Caco-2 (cell line): ENCODE measurements at regions of chr18 and their contacts with region 1.

Region 1: GRCh38 chr18:21111341-21112139 is at the start of gene ROCK1:
- DNase-seq: peak; percentile 97 to 98
- H3K4me3 ChIP-seq: peak within 1 kb of the TSS; percentile 90
- H3K4me3 Mint-ChIP-seq: no peak within 1 kb of the TSS
- H3K27ac Mint-ChIP-seq: peak within 1 kb of the TSS; percentile 79
- H3K4me1 ChIP-seq: peaks cover 7% of the 10 kb centered on the region; the same call in 1 of the 2 replicates
- H3K4me1 Mint-ChIP-seq: no peaks in the 10 kb centered on the region
- H3K27me3 ChIP-seq: no peaks in the 10 kb centered on the region
- H3K27me3 Mint-ChIP-seq: no peaks in the 10 kb centered on the region
- CTCF ChIP-seq: no peak
- total RNA-seq, gene ROCK1: 50.3 and 51.3 TPM in 2 replicates

Region 2: GRCh38 chr18:20971886-20972267 is 139.7 kb before region 1 on chr18:
- CTCF ChIA-PET with region 1: interaction called, 3 read pairs
- POLR2A ChIA-PET with region 1: no interaction called
- intact Hi-C with region 1: loop called (anchors 10 kb)
- DNase-seq: peak in 1 of 2 experiments; percentile 55
- H3K4me3 ChIP-seq: no peak overlapping the region
- H3K4me3 Mint-ChIP-seq: no peak overlapping the region
- H3K27ac Mint-ChIP-seq: no peak overlapping the region
- H3K4me1 ChIP-seq: no peaks in the 10 kb centered on the region
- H3K4me1 Mint-ChIP-seq: peaks cover 6% of the 10 kb centered on the region
- H3K27me3 ChIP-seq: no peaks in the 10 kb centered on the region
- H3K27me3 Mint-ChIP-seq: no peaks in the 10 kb centered on the region
- CTCF ChIP-seq: peak; percentile 45 to 52

Region 3: DNA sequence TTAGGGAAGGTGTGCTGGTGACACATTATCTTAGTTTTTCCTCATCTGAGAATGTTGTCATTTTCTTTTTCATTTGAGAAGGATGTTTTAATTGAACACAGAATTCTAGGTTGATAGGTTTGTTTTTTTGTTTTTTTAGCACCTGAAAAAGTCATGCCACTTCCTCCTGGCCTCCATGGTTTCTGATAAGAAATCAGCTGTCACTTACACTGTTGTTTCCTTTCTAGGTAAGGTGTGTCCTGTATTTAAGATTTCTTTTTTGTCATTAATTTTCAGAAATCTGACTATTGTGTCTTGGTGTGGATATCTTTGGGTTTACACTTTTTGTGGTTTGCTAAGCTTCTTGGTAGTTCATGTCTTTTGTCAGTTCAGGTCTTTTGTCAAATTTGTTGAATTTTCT is 99.2 kb before region 1 on chr18:
- CTCF ChIA-PET with region 1: no interaction called
- POLR2A ChIA-PET with region 1: no interaction called
- intact Hi-C with region 1: loop called (anchors 5 kb)
- DNase-seq: no peak
- H3K4me3 ChIP-seq: no peak overlapping the region
- H3K4me3 Mint-ChIP-seq: no peak overlapping the region
- H3K27ac Mint-ChIP-seq: no peak overlapping the region
- H3K4me1 ChIP-seq: peaks cover 19% of the 10 kb centered on the region
- H3K4me1 Mint-ChIP-seq: peaks cover 18% of the 10 kb centered on the region
- H3K27me3 ChIP-seq: no peaks in the 10 kb centered on the region
- H3K27me3 Mint-ChIP-seq: no peaks in the 10 kb centered on the region
- CTCF ChIP-seq: no peak

Region 4: GRCh38 chr18:21053127-21053526 is 58.4 kb before region 1 on chr18:
- CTCF ChIA-PET with region 1: no interaction called
- POLR2A ChIA-PET with region 1: no interaction called
- intact Hi-C with region 1: loop called (anchors 5 kb)
- DNase-seq: no peak
- H3K4me3 ChIP-seq: no peak overlapping the region
- H3K4me3 Mint-ChIP-seq: no peak overlapping the region
- H3K27ac Mint-ChIP-seq: no peak overlapping the region
- H3K4me1 ChIP-seq: peaks cover 7% of the 10 kb centered on the region
- H3K4me1 Mint-ChIP-seq: peaks cover 5% of the 10 kb centered on the region
- H3K27me3 ChIP-seq: no peaks in the 10 kb centered on the region
- H3K27me3 Mint-ChIP-seq: no peaks in the 10 kb centered on the region
- CTCF ChIP-seq: no peak

Region 5: DNA sequence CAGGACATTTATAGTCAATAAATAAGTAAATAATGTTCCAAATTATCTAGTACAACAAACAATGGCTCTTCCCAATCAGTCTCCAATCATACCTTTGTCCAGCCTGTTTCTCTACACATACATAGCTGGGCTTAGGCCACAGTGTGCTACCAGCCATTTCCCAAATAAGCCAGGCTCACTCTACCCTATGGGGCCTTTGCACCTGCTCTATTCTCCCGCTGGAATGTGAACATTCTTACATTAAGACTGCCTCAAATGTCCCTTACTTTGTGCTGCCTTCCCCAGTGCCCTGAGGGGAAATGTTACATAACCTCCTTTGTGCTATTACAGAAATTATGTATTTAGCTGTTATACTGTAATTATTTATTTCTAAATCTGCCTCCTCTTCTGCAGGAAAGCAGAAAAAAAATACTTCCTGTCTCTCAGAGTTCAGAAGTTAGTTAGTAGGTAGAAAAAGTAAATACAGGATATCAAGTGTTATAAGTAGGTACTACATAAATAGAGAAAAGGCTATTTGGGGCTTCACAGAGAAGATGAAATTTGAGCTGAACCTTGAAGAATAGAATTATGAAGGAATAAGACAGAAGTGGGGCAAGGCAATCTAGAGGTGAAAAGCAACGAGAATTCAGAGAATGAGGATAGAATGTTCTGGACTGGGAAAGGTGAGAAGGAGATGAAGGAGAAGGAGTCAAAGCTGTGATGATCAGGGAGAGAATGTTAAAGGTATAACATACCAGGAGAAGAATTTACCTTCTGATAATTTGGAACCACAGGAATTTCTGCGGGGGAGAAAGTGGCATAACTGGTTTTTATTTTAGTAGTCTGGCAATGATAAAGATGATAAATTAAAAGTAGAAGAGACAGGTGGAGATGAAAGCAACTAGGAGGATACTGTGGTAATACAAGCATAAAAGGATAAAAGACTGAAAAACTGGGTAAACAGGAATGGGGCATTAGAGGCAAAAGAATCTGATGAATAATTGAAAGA is 36.9 kb before region 1 on chr18:
- CTCF ChIA-PET with region 1: no interaction called
- POLR2A ChIA-PET with region 1: interaction called, 3 read pairs
- intact Hi-C with region 1: loop called (anchors 5 kb)
- DNase-seq: peak; percentile 58 to 68
- H3K4me3 ChIP-seq: no peak overlapping the region
- H3K4me3 Mint-ChIP-seq: peak overlapping the region; percentile 52
- H3K27ac Mint-ChIP-seq: peak overlapping the region; percentile 58
- H3K4me1 ChIP-seq: peaks cover 50% of the 10 kb centered on the region
- H3K4me1 Mint-ChIP-seq: peaks cover 34% of the 10 kb centered on the region
- H3K27me3 ChIP-seq: no peaks in the 10 kb centered on the region
- H3K27me3 Mint-ChIP-seq: no peaks in the 10 kb centered on the region
- CTCF ChIP-seq: no peak

Region 6: GRCh38 chr18:21167630-21168377 is 56.3 kb after region 1 on chr18:
- CTCF ChIA-PET with region 1: no interaction called
- POLR2A ChIA-PET with region 1: no interaction called
- intact Hi-C with region 1: loop called (anchors 1 kb)
- DNase-seq: peak; percentile 85
- H3K4me3 ChIP-seq: no peak overlapping the region
- H3K4me3 Mint-ChIP-seq: no peak overlapping the region
- H3K27ac Mint-ChIP-seq: peak overlapping the region; percentile 16
- H3K4me1 ChIP-seq: no peaks in the 10 kb centered on the region
- H3K4me1 Mint-ChIP-seq: no peaks in the 10 kb centered on the region
- H3K27me3 ChIP-seq: no peaks in the 10 kb centered on the region
- H3K27me3 Mint-ChIP-seq: no peaks in the 10 kb centered on the region
- CTCF ChIP-seq: no peak

Region 7: GRCh38 chr18:21361307-21361880 is 249.9 kb after region 1 on chr18:
- CTCF ChIA-PET with region 1: no interaction called
- POLR2A ChIA-PET with region 1: no interaction called
- intact Hi-C with region 1: no loop called
- DNase-seq: peak; percentile 31 to 41
- H3K4me3 ChIP-seq: no peak overlapping the region
- H3K4me3 Mint-ChIP-seq: no peak overlapping the region
- H3K27ac Mint-ChIP-seq: no peak overlapping the region
- H3K4me1 ChIP-seq: peaks cover 36% of the 10 kb centered on the region
- H3K4me1 Mint-ChIP-seq: peaks cover 21% of the 10 kb centered on the region
- H3K27me3 ChIP-seq: no peaks in the 10 kb centered on the region
- H3K27me3 Mint-ChIP-seq: no peaks in the 10 kb centered on the region
- CTCF ChIP-seq: no peak